ENCODE measurements at regions of chr5 and their contacts with region 1.

Region 1: DNA sequence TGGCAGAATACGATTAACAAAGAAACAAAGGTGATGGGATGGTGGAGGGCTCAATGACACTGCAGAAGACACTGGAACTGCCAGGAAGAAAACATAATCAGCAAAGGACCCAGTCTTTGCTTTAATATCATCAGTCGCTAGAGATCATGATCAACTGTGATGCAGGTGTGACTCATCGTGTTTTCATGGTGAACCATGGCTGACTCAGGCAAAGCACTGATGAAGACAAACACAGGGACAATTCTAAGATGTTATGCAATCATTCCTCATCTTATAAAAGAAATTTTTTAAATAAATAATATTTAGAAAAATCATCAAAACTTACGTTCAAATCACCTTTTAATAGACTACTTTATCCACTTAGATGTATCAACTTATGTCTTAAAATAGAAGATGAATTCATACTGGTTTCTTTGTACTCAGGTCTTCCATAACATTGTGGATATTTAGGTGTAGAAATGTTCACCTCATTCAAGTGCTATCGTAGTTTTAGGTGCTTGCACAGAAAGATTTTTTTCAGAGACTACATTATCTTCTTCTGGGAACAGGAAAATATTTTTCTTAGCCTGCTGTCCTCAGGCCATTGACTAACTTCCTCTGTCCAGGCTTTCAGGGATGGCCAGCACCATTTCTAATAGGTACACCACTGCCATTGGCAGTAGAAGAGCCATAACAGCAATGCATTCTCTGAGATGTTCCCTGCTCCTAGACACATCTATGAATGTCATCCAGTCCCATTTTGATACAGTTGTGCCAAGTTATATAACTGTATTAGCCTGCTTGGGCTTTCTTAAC is 673.4 kb upstream of the MEF2C start:
- DNase-seq: no peak
- H3K4me3 ChIP-seq: no peak overlapping the region
- H3K27ac ChIP-seq: no peak overlapping the region
- H3K4me1 ChIP-seq: no peaks in the 10 kb centered on the region
- H3K27me3 ChIP-seq: no peaks in the 10 kb centered on the region
- CTCF ChIP-seq: no peak
- POLR2A ChIP-seq: no peak

Region 2: DNA sequence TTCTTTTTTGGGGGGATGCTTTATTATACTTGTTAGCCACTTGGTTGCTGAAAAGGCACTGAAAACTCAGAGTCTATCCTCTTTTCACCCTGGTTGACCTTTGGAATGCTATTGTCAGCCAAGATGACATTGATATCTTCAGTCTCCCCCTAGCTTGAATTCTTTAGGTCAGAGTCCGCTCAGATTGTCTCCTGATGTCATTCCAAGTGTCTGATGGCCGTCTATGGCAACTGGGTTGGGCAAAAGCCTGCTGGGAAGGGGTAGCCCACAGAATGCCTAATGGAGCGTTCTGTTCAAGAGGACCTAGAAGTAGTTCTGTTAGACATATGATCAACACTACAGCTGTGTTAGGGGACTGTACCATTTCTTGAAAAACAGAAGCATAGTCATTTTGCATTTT is 663.7 kb before region 1 on chr5:
- intact Hi-C with region 1: no loop called
- DNase-seq: no peak
- H3K4me3 ChIP-seq: no peak overlapping the region
- H3K27ac ChIP-seq: no peak overlapping the region
- H3K4me1 ChIP-seq: no peaks in the 10 kb centered on the region
- H3K27me3 ChIP-seq: no peaks in the 10 kb centered on the region
- CTCF ChIP-seq: no peak
- POLR2A ChIP-seq: no peak

Region 3: DNA sequence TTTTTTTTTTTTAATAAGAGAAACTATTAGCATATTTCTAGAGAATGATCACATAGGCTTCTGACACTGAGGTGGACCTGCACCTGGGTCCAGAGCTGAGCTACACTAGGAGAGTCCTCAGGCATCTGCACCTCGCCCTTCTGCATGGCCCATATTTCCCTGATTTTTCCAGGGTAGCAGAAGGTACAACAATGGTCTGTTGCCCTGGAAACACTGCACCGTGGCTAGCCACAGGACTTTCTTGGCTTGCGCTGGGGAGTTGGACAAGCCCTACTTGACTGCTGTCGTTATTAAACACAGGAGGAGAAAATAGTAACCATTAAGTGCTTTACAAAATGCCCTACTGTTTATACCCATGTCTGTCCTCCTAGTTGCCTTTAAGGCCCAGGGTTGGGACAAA is 57.7 kb before region 1 on chr5:
- intact Hi-C with region 1: no loop called
- DNase-seq: no peak
- H3K4me3 ChIP-seq: no peak overlapping the region
- H3K27ac ChIP-seq: no peak overlapping the region
- H3K4me1 ChIP-seq: no peaks in the 10 kb centered on the region
- H3K27me3 ChIP-seq: no peaks in the 10 kb centered on the region
- CTCF ChIP-seq: no peak
- POLR2A ChIP-seq: no peak

Region 4: DNA sequence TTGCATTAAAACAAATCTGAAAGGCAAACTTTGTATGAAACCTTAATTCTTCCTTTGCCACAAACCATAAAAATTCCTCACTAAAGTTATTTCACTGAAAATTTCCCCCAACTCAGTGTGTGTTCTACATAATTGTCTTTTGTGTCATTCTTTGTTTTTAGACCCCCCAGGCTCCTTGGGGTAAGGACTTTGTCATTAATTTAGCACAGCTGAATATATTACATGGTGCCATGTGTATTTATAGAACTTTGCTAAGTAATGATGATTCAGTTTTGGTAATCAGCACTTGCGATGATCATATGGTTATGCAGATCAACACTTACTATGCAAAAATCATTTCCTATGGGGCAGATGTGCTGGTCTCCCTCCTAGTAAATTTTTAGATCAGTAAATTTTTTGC is 38.6 kb after region 1 on chr5:
- intact Hi-C with region 1: loop called (anchors 2 kb)
- DNase-seq: no peak
- H3K4me3 ChIP-seq: no peak overlapping the region
- H3K27ac ChIP-seq: no peak overlapping the region
- H3K4me1 ChIP-seq: no peaks in the 10 kb centered on the region
- H3K27me3 ChIP-seq: no peaks in the 10 kb centered on the region
- CTCF ChIP-seq: no peak
- POLR2A ChIP-seq: no peak

Measured in breast epithelium (tissue), 4 donors.